Activated CD4-positive, alpha-beta T cell treated with anti-CD3 and anti-CD28 coated beads for 36 hours (primary cell): ENCODE measurements at regions of chr12 and their contacts with region 1.

Region 1: GRCh38 chr12:69585189-69586062 is at the start of gene CCT2:
- DNase-seq: peak; percentile 98
- ATAC-seq: peak; percentile 94
- H3K4me3 Mint-ChIP-seq: peak within 1 kb of the TSS; percentile 96
- H3K27ac Mint-ChIP-seq: peak within 1 kb of the TSS; percentile 95
- H3K4me1 Mint-ChIP-seq: peaks cover 30% of the 10 kb centered on the region
- H3K27me3 Mint-ChIP-seq: no peaks in the 10 kb centered on the region
- total RNA-seq, gene CCT2: 293 to 360 TPM

Region 2: GRCh38 chr12:69470189-69471075 is 115.0 kb before region 1 on chr12 and contains the start of gene FRS2:
- CTCF ChIA-PET with region 1: no interaction called
- POLR2A ChIA-PET with region 1: no interaction called
- intact Hi-C with region 1: loop called (anchors 1 to 5 kb)
- DNase-seq: peak; percentile 93
- ATAC-seq: peak; percentile 99
- H3K4me3 Mint-ChIP-seq: peak within 1 kb of the TSS; percentile 92
- H3K27ac Mint-ChIP-seq: peak within 1 kb of the TSS; percentile 99
- H3K4me1 Mint-ChIP-seq: peaks cover 52% of the 10 kb centered on the region
- H3K27me3 Mint-ChIP-seq: no peaks in the 10 kb centered on the region
- total RNA-seq, gene FRS2: 9.5 to 10.4 TPM

Region 3: DNA sequence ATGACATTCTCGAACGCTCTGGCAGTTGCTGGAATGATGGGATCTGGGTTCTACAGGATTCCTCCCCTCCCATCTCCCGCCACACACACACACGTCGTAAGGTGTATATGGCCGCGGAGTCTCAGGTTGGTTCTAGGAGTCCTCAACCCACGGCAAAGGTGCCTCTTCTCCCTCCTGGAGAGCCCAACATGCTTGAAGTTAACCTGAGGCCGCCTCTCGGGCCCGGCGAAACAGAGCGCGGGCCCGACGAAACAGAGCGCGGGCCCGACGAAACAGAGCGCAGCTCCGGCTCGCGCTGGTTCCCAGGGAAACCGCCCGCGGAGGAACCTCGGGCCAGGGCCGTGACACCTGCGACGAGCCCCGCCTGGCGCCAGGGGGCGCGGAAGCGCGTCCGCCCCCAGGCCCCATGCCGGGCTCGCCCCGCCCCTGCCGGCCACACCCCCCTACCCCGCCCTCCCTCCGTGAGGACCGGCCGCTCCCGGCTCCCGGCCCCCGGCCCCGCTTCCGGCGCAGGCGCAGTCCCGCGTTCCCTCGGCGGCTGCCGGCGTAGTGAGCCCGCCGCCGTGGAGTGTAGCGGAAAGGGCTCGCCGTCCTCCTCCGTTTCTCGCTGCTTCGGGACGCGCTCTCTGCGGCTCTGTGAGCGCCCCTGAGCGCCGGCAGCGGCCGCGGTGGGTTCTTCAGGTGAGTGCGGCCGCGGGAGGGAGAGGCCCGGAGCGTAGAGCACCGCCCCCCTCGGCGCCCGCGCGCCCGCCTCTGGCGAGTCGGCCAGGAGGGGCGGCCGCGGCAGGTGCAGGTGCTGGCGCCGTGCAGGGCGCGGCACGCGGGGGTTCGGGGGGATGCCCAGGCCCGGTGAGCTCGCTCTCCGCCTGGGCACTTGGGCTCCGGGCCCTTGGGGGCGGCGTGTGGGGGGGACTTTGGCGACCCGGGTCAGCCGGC is 153.2 kb after region 1 on chr12 and contains the start of gene RAB3IP:
- CTCF ChIA-PET with region 1: no interaction called
- POLR2A ChIA-PET with region 1: no interaction called
- intact Hi-C with region 1: loop called (anchors 1 to 10 kb)
- DNase-seq: peak; percentile 97
- ATAC-seq: peak; percentile 88
- H3K4me3 Mint-ChIP-seq: peak within 1 kb of the TSS; percentile 79
- H3K27ac Mint-ChIP-seq: peak within 1 kb of the TSS; percentile 75
- H3K4me1 Mint-ChIP-seq: peaks cover 26% of the 10 kb centered on the region
- H3K27me3 Mint-ChIP-seq: peaks cover 10% of the 10 kb centered on the region
- total RNA-seq, gene RAB3IP: 30.7 to 39.9 TPM

Region 4: DNA sequence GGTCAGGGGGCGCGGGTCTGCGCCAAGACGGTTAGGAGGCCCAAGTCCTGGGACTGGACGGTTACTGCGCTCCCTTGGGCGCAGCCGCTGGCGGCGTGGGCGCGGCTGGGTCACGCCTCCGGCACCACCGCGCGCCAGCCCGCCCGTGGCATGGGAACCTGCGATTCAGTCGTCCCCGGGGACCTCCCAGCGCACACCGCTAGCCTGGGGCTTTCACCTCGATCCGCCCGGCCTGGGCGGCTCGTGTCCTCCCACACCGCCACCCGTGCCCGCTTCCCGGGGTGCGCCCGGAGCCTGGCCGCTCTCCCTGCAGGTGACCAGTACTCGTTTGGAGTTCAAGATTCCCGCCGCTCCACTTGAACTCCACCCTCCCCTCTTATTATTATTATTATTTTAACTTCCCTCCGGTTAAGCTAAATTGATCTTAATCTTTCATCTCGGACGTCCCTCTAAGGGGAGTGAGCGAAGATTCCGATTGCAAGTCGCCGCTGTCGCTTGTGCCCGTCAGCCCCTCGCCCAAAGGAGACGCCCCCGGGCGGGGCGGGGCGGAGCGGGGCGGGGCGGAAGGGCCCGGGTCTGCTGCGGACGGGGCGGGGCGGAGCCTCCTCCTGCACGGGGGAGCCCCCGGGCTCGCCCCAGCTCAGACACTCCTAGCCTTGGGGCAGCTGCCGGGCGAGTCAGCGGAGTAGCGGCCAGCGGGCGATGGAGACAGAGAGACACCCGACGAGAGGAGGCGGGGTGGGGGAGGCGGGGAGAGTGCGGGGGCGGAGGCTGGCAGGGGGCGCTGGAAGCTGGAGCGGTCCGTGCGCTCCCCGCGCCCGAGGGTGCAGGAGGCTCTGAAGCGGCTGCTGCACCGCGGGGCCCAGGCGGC is 780.5 kb after region 1 on chr12 and contains the start of gene KCNMB4:
- CTCF ChIA-PET with region 1: no interaction called
- POLR2A ChIA-PET with region 1: no interaction called
- intact Hi-C with region 1: loop called in 1 of 2 experiments (anchors 5 kb)
- DNase-seq: peak; percentile 88
- ATAC-seq: peak; percentile 91
- H3K4me3 Mint-ChIP-seq: peak within 1 kb of the TSS; percentile 86
- H3K27ac Mint-ChIP-seq: peak within 1 kb of the TSS; percentile 34
- H3K4me1 Mint-ChIP-seq: peaks cover 17% of the 10 kb centered on the region
- H3K27me3 Mint-ChIP-seq: peaks cover 6% of the 10 kb centered on the region
- total RNA-seq, gene KCNMB4: 0.94 to 2.1 TPM